ENCODE measurements at regions of chr5 and their contacts with region 1.

Region 1: DNA sequence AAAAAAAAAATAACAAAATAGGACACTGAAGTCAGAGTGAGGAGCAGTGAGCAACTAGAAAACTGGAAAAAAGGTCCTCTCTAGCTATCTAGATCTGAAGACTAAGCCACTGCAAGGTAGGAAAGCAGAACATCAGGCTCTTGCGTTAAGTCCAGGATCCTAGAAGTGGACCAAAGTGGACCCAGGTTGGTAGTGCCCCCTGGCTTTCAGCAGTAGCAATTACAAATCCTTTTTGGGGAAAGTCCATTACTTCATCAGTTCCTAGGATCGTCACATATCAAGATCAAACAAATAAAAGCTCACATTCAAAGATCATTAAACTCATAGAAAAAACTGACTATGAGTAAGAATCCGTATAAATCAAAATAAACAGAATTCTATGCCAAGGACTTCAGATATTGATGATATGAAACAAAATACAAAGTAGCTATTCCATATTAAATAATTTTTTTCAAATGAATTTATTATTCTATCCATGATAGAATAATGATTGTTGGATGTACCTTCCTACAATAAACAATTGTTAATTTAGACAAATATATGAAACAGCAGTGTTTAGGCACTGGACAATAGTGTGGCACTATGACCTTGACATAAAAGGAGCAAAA is 6.5 kb upstream of the RICTOR start:
- DNase-seq: peak; percentile 74 to 79 (median 77)
- H3K4me3 ChIP-seq: peak overlapping the region in 1 of 7 experiments; percentile 48
- H3K27ac ChIP-seq: no peak overlapping the region
- H3K4me1 ChIP-seq: peaks cover 9 to 31% (median 14%) of the 10 kb centered on the region in 4 experiments
- H3K27me3 ChIP-seq: no peaks in the 10 kb centered on the region

Region 2: DNA sequence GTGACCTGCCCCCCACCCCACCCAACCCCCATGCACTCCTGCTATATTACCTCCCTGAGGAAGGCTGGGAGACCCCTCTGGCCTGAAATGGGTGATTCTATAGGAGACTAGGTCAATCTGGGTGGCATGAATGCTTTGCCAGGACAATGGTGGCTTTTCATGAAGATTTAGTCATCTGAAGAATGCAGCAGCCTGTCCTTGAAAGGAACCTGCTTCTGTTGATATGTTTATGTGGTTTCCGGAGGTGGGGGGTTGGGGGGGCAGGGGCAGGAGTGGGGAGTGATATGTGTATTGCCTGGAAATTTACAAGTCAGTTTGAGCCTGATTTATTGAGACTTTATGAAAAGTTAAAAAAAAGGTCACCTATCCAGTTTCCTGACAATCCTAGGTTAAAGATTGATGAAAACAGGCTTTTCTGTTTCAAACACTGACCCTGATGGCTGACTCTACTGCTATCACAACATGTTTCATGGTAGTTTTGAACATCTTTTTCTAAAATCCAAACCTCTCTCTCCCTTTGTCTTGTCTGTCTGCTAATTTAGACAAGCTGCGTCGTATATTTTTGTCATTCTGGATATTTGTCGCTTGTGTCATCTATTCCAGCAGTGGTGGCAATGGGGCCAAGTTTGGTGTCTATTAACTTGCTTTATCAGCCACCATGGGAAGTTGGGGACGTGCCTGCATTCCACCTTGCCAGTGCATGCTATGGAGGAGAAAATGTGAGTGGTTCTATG is 976.0 kb before region 1 on chr5:
- CTCF ChIA-PET with region 1: no interaction called
- POLR2A ChIA-PET with region 1: no interaction called
- DNase-seq: peak; percentile 74 to 94 (median 91)
- H3K4me3 ChIP-seq: peak overlapping the region in 2 of 7 experiments; percentile 29 to 48
- H3K27ac ChIP-seq: no peak overlapping the region
- H3K4me1 ChIP-seq: peaks cover 9 to 29% (median 22%) of the 10 kb centered on the region in 4 experiments
- H3K27me3 ChIP-seq: no peaks in the 10 kb centered on the region

Region 3: GRCh38 chr5:39092581-39093350 is 12.1 kb after region 1 on chr5:
- CTCF ChIA-PET with region 1: interaction called, 25 read pairs
- POLR2A ChIA-PET with region 1: no interaction called
- DNase-seq: no peak
- H3K4me3 ChIP-seq: no peak overlapping the region
- H3K27ac ChIP-seq: no peak overlapping the region
- H3K4me1 ChIP-seq: peaks cover 0 to 3% (median 0%) of the 10 kb centered on the region in 4 experiments
- H3K27me3 ChIP-seq: no peaks in the 10 kb centered on the region

Region 4: DNA sequence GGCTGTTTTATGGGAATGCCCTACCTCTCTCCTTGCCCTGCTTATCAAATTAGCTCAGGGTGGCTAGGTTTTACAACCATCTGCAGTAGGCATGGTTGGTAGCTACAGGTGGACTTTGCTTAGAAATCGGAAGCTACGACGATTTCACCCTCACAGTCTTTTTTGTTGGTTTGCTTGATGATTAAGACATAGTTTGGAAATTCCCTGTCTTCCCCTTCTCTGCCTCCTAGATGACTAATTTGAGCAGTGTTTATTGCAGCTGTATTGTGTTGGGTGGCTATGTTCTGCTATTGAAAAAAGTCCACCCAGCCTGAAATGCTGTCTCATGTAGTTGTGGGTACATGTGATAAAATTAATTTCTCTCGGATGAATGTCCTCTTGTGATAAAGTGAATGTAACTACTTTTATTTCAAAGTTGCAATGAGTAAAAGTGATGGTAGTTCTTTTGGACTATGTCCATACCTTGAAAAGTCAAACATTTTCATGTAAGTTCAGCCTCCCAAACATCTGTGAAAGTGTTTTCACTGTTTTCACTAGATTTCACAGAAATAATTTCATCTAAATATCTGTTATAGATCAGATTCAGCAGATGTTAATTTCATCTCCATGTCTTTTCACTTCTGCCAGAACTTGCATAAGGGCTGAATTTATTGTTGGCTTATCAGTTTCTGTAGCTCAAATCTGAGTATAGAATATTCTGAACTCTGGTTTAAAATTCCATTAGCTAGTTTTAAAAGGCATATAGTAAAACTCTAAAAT is 176.0 kb after region 1 on chr5:
- CTCF ChIA-PET with region 1: no interaction called
- POLR2A ChIA-PET with region 1: no interaction called
- DNase-seq: peak; percentile 81 to 96 (median 96)
- H3K4me3 ChIP-seq: peak overlapping the region in 1 of 7 experiments; percentile 64
- H3K27ac ChIP-seq: peak overlapping the region in 1 of 2 experiments; percentile 68
- H3K4me1 ChIP-seq: peaks cover 0 to 17% (median 5%) of the 10 kb centered on the region in 4 experiments
- H3K27me3 ChIP-seq: no peaks in the 10 kb centered on the region